ENCODE measurements at regions of chr13 and their contacts with region 1.

Region 1: GRCh38 chr13:110644892-110645521 is 29.7 kb downstream of the NAXD start:
- DNase-seq: peak; percentile 77 to 87
- H3K4me3 ChIP-seq: no peak overlapping the region
- H3K27ac ChIP-seq: peak overlapping the region in 2 of 5 donors; percentile 4 to 49
- H3K4me1 ChIP-seq: peaks cover 11 to 27% (median 19%) of the 10 kb centered on the region in 4 donors
- H3K27me3 ChIP-seq: no peaks in the 10 kb centered on the region
- CTCF ChIP-seq: peak in 3 of 7 experiments; percentile 20 to 42 (median 39)
- EP300 ChIP-seq: no peak
- POLR2A ChIP-seq: no peak

Region 2: DNA sequence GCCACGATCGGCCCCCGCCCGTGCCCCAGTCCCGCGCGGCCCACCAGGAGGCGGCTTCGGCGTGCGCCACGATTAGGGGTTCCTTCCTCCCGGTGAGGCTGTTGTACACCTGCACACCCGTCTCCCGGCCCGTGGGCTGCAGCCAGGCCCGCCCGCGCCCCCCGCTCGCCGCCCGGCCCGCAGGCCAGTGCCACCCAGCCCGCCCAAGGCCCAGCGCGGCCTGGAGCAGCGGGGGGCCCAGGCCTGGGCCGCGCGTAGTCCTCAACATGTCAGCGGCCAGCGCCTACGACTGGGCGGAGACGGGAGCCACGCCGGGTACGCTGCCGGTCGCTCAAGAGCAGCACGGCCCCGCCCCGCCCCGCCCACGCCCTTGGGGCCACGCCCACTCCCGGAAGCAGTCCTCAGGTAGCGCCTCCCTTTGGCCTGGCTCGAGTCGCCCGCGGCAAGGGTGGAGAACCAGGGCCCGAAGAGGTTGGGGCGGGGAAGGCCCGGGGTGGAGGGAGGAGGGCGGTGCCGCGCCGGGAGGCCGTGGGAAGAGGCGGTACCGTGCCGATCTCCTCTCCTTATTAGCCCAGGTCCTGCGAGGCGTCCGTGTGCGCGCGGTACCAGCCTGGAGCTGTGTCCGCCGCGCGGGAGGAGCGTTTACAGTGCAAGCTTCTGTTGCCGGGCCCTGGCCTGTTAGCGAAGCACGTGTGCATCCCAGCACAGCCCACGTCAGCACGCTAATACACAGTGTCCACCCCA is 61.0 kb after region 1 on chr13 and contains the start of gene CARS2:
- intact Hi-C with region 1: loop called (anchors 10 kb)
- DNase-seq: peak; percentile 98 to 99
- H3K4me3 ChIP-seq: peak within 1 kb of the TSS; percentile 64 to 87 (median 78)
- H3K27ac ChIP-seq: peak within 1 kb of the TSS; percentile 83 to 92 (median 88)
- H3K4me1 ChIP-seq: peaks cover 19 to 56% (median 44%) of the 10 kb centered on the region in 4 donors
- H3K27me3 ChIP-seq: no peaks in the 10 kb centered on the region
- CTCF ChIP-seq: peak in 1 of 7 experiments; percentile 19
- EP300 ChIP-seq: peak; percentile 44
- POLR2A ChIP-seq: no peak
- total RNA-seq, gene CARS2: 59.4 to 247 (median 70.0) TPM